ENCODE measurements at regions of chr1 and their contacts with region 1.

Region 1: DNA sequence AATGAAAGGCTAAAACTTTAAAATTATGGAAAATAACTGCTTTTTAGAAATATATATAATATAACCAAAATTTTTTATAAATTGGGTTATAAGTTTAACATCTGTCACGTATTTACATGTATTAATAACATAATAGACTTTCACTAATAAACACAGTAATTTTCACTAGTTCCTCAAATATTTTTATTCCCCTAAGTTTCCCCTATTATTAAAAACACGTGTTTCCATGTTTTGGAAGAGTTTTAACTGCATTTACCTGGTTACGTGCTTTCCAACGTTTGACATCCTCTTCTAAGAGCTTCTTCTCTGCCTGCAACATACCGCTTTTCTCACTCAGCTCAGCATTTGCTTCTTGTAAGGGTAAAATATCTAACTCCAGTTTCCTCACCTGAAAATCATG is 34.3 kb downstream of the TPR start:
- DNase-seq: no peak
- ATAC-seq: no peak
- H3K4me3 ChIP-seq: no peak overlapping the region
- H3K27ac ChIP-seq: no peak overlapping the region
- H3K4me1 ChIP-seq: no peaks in the 10 kb centered on the region
- CTCF ChIP-seq: no peak
- EP300 ChIP-seq: no peak
- POLR2A ChIP-seq: no peak
- RAD21 ChIP-seq: no peak

Region 2: GRCh38 chr1:186272486-186272885 is 68.3 kb before region 1 on chr1:
- CTCF ChIA-PET with region 1: no interaction called
- POLR2A ChIA-PET with region 1: no interaction called
- DNase-seq: no peak
- ATAC-seq: no peak
- H3K4me3 ChIP-seq: no peak overlapping the region
- H3K27ac ChIP-seq: no peak overlapping the region
- H3K4me1 ChIP-seq: no peaks in the 10 kb centered on the region
- CTCF ChIP-seq: peak; percentile 27; the same call in 1 of the 3 replicates
- EP300 ChIP-seq: no peak
- POLR2A ChIP-seq: no peak
- RAD21 ChIP-seq: peak; percentile 18 to 30; a peak in 1 of 5 replicates

Region 3: DNA sequence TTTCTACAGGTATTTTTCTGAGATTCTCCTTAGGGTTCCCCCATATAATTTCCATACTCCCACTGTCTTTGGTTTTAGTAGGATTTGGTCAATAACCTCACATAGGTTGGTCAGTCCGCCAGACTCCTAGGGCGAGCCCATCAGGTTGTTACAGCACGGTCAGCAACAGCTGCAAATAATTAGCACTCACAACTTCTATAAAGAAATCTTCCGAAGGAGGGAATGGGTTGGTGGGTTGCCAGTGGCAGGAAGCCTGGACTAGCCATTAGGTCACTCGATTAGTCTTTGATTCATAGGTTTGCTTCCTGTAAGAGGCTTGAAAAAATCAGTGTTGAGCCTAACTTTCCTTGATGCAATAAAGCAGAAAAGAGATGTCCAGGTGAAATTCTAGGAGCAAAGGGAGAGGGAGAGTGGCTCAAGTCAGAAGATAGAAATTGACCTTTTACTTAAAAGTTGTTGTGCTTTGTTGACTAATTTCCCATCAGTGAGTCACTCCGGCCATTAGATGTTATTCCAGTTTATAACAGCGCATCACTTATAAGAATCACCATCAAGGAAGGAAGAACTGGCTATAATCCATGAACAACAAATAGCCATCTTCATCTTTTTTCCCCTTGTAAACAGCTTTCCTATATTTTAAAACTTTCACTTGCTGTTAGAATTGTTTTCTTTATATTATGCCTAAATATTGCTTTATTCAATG is 54.0 kb before region 1 on chr1:
- CTCF ChIA-PET with region 1: no interaction called
- POLR2A ChIA-PET with region 1: no interaction called
- DNase-seq: no peak
- ATAC-seq: no peak
- H3K4me3 ChIP-seq: no peak overlapping the region
- H3K27ac ChIP-seq: no peak overlapping the region
- H3K4me1 ChIP-seq: no peaks in the 10 kb centered on the region
- CTCF ChIP-seq: no peak
- EP300 ChIP-seq: no peak
- POLR2A ChIP-seq: no peak
- RAD21 ChIP-seq: no peak

Region 4: GRCh38 chr1:186308264-186309060 is 32.3 kb before region 1 on chr1:
- CTCF ChIA-PET with region 1: no interaction called
- POLR2A ChIA-PET with region 1: no interaction called
- DNase-seq: no peak
- ATAC-seq: no peak
- H3K4me3 ChIP-seq: no peak overlapping the region
- H3K27ac ChIP-seq: no peak overlapping the region
- H3K4me1 ChIP-seq: no peaks in the 10 kb centered on the region
- CTCF ChIP-seq: no peak
- EP300 ChIP-seq: no peak
- POLR2A ChIP-seq: no peak
- RAD21 ChIP-seq: no peak

Region 5: GRCh38 chr1:186325239-186325638 is 15.5 kb before region 1 on chr1:
- CTCF ChIA-PET with region 1: interaction called, 11 read pairs
- POLR2A ChIA-PET with region 1: no interaction called
- DNase-seq: peak in 1 of 2 experiments; percentile 36
- ATAC-seq: peak; percentile 43 to 69; a peak in 4 of 6 replicates
- H3K4me3 ChIP-seq: no peak overlapping the region
- H3K27ac ChIP-seq: no peak overlapping the region
- H3K4me1 ChIP-seq: no peaks in the 10 kb centered on the region
- CTCF ChIP-seq: peak; percentile 44
- EP300 ChIP-seq: no peak
- POLR2A ChIP-seq: no peak
- RAD21 ChIP-seq: peak in 1 of 2 experiments; percentile 37; a peak in 2 of 5 replicates

Region 6: GRCh38 chr1:186330758-186331157 is 10.0 kb before region 1 on chr1:
- CTCF ChIA-PET with region 1: interaction called, 11 read pairs
- POLR2A ChIA-PET with region 1: no interaction called
- DNase-seq: peak in 1 of 2 experiments; percentile 6
- ATAC-seq: peak in 1 of 2 experiments; percentile 76; a peak in 3 of 6 replicates
- H3K4me3 ChIP-seq: no peak overlapping the region
- H3K27ac ChIP-seq: no peak overlapping the region
- H3K4me1 ChIP-seq: no peaks in the 10 kb centered on the region
- CTCF ChIP-seq: no peak; the same call in 2 of the 3 replicates
- EP300 ChIP-seq: no peak
- POLR2A ChIP-seq: no peak
- RAD21 ChIP-seq: no peak